ENCODE measurements at regions of chr14 and their contacts with region 1.

Region 1: GRCh38 chr14:64338616-64339316 is 44.6 kb upstream of the ESR2 start:
- DNase-seq: peak; percentile 99
- H3K4me3 Mint-ChIP-seq: peak overlapping the region; percentile 94
- H3K27ac Mint-ChIP-seq: peak overlapping the region; percentile 83
- H3K4me1 Mint-ChIP-seq: peaks cover 6% of the 10 kb centered on the region
- H3K27me3 Mint-ChIP-seq: no peaks in the 10 kb centered on the region
- CTCF ChIP-seq: no peak

Region 2: DNA sequence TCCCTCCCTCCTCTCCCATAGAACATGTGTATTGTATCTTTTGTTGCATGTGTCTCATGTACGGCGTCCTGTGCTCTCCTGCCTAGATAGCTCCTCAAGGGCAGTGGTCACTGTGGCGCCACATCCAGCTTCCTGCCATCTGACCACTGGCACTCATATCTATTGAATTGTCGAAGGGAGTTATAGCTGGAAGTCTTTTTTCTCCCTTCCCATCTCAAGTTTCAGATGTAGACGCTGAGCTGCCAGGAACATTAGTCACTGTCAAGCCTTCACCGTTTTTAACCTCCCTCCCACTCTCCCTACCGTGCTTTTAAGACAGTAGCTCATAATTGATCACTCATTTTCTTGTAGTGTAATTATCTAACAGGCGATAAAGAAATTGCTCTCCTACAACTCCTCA is 82.4 kb after region 1 on chr14:
- CTCF ChIA-PET with region 1: interaction called, 4 read pairs
- POLR2A ChIA-PET with region 1: no interaction called
- intact Hi-C with region 1: loop called (anchors 10 kb)
- DNase-seq: peak; percentile 62
- H3K4me3 Mint-ChIP-seq: no peak overlapping the region
- H3K27ac Mint-ChIP-seq: no peak overlapping the region
- H3K4me1 Mint-ChIP-seq: peaks cover 12% of the 10 kb centered on the region
- H3K27me3 Mint-ChIP-seq: no peaks in the 10 kb centered on the region
- CTCF ChIP-seq: no peak

Region 3: GRCh38 chr14:64478634-64479250 is 140.0 kb after region 1 on chr14:
- CTCF ChIA-PET with region 1: interaction called, 10 read pairs
- POLR2A ChIA-PET with region 1: no interaction called
- intact Hi-C with region 1: no loop called
- DNase-seq: peak; percentile 40
- H3K4me3 Mint-ChIP-seq: no peak overlapping the region
- H3K27ac Mint-ChIP-seq: no peak overlapping the region
- H3K4me1 Mint-ChIP-seq: peaks cover 6% of the 10 kb centered on the region
- H3K27me3 Mint-ChIP-seq: no peaks in the 10 kb centered on the region
- CTCF ChIP-seq: peak; percentile 35

Region 4: GRCh38 chr14:64503478-64504309 is 164.9 kb after region 1 on chr14 and contains the start of gene ZBTB25:
- CTCF ChIA-PET with region 1: interaction called, 3 read pairs
- POLR2A ChIA-PET with region 1: interaction called, 15 read pairs
- intact Hi-C with region 1: loop called (anchors 10 kb)
- DNase-seq: peak; percentile 90
- H3K4me3 Mint-ChIP-seq: peak within 1 kb of the TSS; percentile 83
- H3K27ac Mint-ChIP-seq: peak within 1 kb of the TSS; percentile 98
- H3K4me1 Mint-ChIP-seq: peaks cover 51% of the 10 kb centered on the region
- H3K27me3 Mint-ChIP-seq: no peaks in the 10 kb centered on the region
- CTCF ChIP-seq: no peak
- total RNA-seq, gene ZBTB25: 11.7 and 15.3 TPM in 2 replicates

Region 5: DNA sequence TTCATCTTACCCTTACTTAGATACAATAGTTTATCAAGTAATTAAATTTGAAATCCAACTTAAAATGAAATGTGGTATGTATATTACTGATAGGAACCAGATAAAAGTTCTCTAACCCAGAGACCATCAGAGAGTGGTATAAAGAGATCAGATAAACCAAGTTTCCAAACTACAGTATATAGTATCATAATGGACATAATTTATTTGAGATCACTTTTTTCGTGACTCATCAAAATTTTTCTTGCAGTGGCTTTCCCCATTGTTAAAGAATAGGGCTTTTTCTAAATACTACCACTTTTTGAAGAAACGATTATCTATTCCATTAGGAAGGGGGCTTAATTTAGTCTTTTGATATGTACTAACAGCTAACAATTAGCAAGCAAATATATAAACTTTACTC is 186.6 kb after region 1 on chr14:
- CTCF ChIA-PET with region 1: no interaction called
- POLR2A ChIA-PET with region 1: no interaction called
- intact Hi-C with region 1: no loop called
- DNase-seq: no peak
- H3K4me3 Mint-ChIP-seq: no peak overlapping the region
- H3K27ac Mint-ChIP-seq: no peak overlapping the region
- H3K4me1 Mint-ChIP-seq: no peaks in the 10 kb centered on the region
- H3K27me3 Mint-ChIP-seq: no peaks in the 10 kb centered on the region
- CTCF ChIP-seq: no peak

Region 6: DNA sequence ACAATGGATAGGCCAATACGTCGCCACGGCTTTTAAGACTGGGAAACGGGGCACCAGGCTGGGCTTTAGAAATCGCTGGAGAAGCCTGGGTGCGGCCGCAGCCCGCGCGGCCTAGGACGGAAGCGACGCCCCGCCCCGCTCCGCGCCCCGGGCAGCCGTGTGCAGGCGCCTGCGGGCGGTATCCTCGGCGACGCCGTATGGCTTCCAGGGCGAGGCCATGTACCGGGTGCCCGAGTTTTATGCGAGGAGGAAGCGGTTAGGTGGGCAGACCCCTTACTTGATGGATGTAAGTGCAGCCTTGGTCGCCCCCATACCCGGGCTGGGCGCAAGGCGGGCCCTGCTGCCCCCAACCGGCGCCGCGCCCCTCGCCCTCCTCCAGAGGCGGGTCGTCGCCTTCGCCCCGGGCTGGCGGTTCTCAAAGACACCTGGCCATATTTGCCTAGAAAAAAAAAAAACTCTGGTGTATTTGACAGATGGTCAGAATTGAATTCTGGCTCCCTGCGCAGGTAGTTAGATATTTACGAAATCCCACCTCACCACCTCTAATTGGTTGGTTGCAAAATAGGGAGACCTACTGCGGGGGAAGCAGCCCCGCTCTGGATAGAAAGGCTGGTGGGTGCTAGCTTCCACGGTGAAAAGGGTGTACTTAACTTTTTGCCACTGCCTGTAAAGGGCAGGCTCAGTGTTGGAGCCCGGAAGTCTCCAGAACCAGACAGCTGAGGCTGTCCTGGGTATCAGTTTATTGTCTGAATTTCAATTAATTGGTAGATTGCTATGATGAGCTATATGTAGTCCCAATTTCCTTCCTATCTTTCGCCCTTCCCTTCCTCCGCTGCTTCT is 211.2 kb after region 1 on chr14 and contains the start of gene PPP1R36:
- CTCF ChIA-PET with region 1: no interaction called
- POLR2A ChIA-PET with region 1: no interaction called
- intact Hi-C with region 1: no loop called
- DNase-seq: no peak
- H3K4me3 Mint-ChIP-seq: no peak within 1 kb of the TSS
- H3K27ac Mint-ChIP-seq: no peak within 1 kb of the TSS
- H3K4me1 Mint-ChIP-seq: no peaks in the 10 kb centered on the region
- H3K27me3 Mint-ChIP-seq: peaks cover 10% of the 10 kb centered on the region
- CTCF ChIP-seq: no peak
- total RNA-seq, gene PPP1R36: 0.47 TPM in 1 of 2 replicates, not detected in the other